Heart left ventricle (tissue), 16 donors: ENCODE measurements at regions of chr21 and their contacts with region 1.

Region 1: GRCh38 chr21:45074048-45074817 is at the start of gene ADARB1:
- DNase-seq: peak; percentile 68 to 84 (median 76)
- ATAC-seq: peak; percentile 63 to 81 (median 74)
- H3K4me3 ChIP-seq: peak within 1 kb of the TSS; percentile 75 to 100 (median 94)
- H3K27ac ChIP-seq: peak within 1 kb of the TSS; percentile 81 to 98 (median 94)
- H3K4me1 ChIP-seq: peaks cover 0 to 44% (median 13%) of the 10 kb centered on the region in 12 donors
- H3K27me3 ChIP-seq: peaks cover 0 to 5% (median 0%) of the 10 kb centered on the region in 9 donors
- CTCF ChIP-seq: no peak
- POLR2A ChIP-seq: peak in 1 of 2 donors; percentile 82
- total RNA-seq, gene ADARB1: 6.9 to 16.3 (median 12.1) TPM

Region 2: DNA sequence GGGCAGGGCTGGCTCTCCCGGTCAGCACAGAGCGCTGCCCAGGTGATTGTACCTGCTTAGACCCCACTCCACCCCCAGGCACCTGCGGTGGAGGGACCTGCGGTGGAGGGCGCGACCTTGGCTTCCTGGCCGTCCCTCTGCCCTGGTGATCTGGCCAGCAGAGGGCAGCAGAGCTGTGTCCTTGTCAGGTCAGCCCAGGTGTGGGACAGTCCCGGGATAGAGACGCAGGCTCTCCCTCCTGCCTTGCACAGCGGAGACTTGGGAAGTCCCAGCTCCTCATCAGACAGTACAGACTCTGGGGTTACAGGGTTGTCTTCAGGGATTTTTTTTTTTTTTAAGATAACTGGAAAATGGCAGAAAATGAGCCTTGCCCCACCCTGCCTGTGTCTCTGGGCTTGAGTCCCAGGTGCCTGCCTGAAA is 124.4 kb before region 1 on chr21:
- intact Hi-C with region 1: loop called in 3 of 10 experiments (anchors 1 to 10 kb)
- DNase-seq: peak; percentile 89 to 94 (median 90)
- ATAC-seq: peak; percentile 59 to 68 (median 62)
- H3K4me3 ChIP-seq: no peak overlapping the region
- H3K27ac ChIP-seq: peak overlapping the region in 11 of 12 donors; percentile 42 to 96 (median 75)
- H3K4me1 ChIP-seq: peaks cover 0 to 87% (median 47%) of the 10 kb centered on the region in 12 donors
- H3K27me3 ChIP-seq: no peaks in the 10 kb centered on the region
- CTCF ChIP-seq: peak; percentile 90 to 97 (median 94)
- POLR2A ChIP-seq: no peak

Region 3: GRCh38 chr21:44958471-44959191 is 115.6 kb before region 1 on chr21:
- intact Hi-C with region 1: loop called in 4 of 10 experiments (anchors 2 to 10 kb)
- DNase-seq: peak; percentile 82 to 92 (median 88)
- ATAC-seq: peak; percentile 65 to 83 (median 66)
- H3K4me3 ChIP-seq: peak overlapping the region in 8 of 12 donors; percentile 11 to 30 (median 25)
- H3K27ac ChIP-seq: peak overlapping the region; percentile 24 to 86 (median 76)
- H3K4me1 ChIP-seq: peaks cover 13 to 92% (median 60%) of the 10 kb centered on the region in 12 donors
- H3K27me3 ChIP-seq: no peaks in the 10 kb centered on the region
- CTCF ChIP-seq: no peak
- POLR2A ChIP-seq: peak in 1 of 2 donors; percentile 36

Region 4: DNA sequence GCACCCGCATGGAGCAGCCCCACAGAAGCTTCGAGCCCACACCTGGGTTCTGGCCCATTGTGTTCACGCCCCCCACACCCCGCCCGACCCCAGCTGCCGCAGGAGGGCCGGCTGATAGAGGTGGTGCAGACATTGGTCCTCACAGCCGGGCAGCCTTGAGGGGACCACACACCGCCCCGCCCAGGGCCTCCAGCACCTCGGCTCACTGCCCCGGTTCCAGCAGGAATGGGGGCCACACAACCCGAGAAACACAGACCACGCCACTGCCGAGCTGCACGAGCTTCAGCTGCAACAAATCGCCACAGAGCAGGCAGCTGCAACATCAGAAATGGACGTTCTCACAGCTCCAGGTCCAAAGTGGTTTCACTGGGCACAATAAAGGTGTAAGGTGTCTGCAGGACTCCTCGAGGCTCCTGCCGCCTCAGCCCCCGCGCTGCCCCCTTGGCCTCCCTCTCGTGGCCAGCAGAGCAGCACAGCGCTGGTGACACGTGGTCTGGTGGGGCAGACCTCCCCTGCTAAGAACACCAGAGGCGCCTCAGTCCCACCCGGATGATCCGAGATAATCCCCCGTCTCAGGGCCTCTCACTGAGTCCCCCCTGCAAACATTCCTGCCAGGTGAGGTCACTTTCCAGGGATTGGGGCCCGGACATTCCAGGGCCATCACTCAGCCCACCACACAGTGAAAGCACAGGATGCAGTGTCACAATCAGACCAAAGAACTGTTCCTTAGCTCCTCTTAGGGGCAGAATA is 62.1 kb before region 1 on chr21:
- intact Hi-C with region 1: loop called in 1 of 10 experiments (anchors 10 kb)
- DNase-seq: peak in 3 of 5 donors; percentile 37 to 62 (median 56)
- ATAC-seq: peak; percentile 37 to 66 (median 50)
- H3K4me3 ChIP-seq: no peak overlapping the region
- H3K27ac ChIP-seq: peak overlapping the region in 1 of 12 donors; percentile 33
- H3K4me1 ChIP-seq: peaks cover 0 to 19% (median 9%) of the 10 kb centered on the region in 12 donors
- H3K27me3 ChIP-seq: peaks cover 0 to 7% (median 0%) of the 10 kb centered on the region in 9 donors
- CTCF ChIP-seq: peak in 2 of 12 donors; percentile 26 to 28
- POLR2A ChIP-seq: no peak

Region 5: DNA sequence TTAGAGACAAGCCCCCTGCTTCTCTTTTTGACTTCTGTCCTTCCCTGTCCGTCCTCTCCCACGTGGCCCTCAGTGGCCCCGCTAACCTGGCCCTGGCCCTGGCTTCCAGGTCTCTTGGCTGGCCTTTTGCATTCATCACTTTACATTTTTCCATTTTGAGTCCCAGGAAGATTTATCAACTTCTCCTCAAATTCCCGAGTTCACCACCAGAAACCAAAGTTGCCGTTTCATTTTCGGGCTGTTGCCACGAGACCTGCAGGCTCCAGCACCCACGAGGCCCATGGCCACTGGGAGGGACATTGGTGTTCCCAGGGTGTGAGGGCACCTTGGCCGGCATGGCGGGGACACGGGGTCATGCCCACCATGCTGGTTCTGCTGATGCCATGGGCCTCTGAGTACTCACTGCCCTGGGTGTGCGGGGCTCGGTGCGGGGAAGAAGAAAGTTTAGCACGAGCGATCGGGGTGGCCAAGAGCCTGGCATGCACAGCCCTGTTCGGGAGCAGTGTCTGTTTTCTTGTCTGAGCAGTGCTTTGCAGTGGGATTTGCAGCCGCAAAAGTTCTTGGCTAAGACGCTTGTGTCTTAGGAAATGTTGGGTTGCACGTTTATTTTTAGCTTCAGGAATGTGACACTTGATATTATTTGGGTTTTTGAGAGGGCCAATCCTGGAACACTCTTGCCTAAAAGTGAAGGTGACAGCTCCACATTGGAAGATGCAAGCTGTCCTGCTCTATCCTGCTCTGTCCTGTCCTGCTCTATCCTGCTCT is 40.3 kb before region 1 on chr21:
- intact Hi-C with region 1: loop called in 1 of 10 experiments (anchors 2 kb)
- DNase-seq: peak in 1 of 5 donors; percentile 26
- ATAC-seq: peak; percentile 23 to 61 (median 44)
- H3K4me3 ChIP-seq: peak overlapping the region in 6 of 12 donors; percentile 4 to 28 (median 24)
- H3K27ac ChIP-seq: peak overlapping the region in 10 of 12 donors; percentile 14 to 55 (median 42)
- H3K4me1 ChIP-seq: peaks cover 5 to 53% (median 30%) of the 10 kb centered on the region in 12 donors
- H3K27me3 ChIP-seq: no peaks in the 10 kb centered on the region
- CTCF ChIP-seq: no peak
- POLR2A ChIP-seq: no peak

Region 6: DNA sequence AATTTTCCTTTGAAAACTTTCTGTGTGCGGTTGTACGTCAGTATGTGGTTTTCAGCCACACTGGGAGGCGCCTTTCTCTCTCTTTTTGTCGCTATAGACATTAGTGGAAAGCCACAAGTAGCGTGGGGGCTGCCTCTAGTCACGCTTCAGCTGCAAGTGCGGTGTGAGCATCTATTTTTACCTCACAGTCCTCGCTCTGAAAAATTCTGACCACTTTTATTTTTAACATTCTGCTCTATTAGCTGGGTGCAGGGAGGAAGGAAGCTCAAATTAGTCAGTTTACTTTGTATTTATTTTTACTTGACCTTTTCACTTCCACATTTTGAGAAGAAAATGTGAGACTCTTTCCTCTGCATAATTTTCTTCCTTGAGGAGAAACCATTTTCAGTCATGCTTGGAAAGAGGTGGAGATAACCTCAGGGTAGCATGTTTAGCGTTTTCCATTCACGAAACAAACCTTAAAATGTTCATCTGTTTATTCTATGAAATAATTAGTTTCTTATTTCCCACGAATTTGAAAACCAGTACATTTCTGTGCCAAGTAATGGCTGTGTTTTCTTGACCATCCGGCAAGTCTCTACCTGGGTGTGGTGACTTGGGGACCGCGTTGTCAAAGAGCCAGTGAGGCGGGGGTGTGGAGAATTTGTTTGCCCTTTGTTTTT is 35.7 kb after region 1 on chr21:
- intact Hi-C with region 1: loop called in 2 of 10 experiments (anchors 5 kb)
- DNase-seq: peak in 1 of 5 donors; percentile 48
- ATAC-seq: peak; percentile 18 to 69 (median 24)
- H3K4me3 ChIP-seq: peak overlapping the region in 9 of 12 donors; percentile 4 to 33 (median 22)
- H3K27ac ChIP-seq: peak overlapping the region in 11 of 12 donors; percentile 25 to 83 (median 71)
- H3K4me1 ChIP-seq: peaks cover 6 to 78% (median 70%) of the 10 kb centered on the region in 12 donors
- H3K27me3 ChIP-seq: no peaks in the 10 kb centered on the region
- CTCF ChIP-seq: no peak
- POLR2A ChIP-seq: no peak

Region 7: GRCh38 chr21:45167796-45168222 is 93.6 kb after region 1 on chr21:
- intact Hi-C with region 1: no loop called
- DNase-seq: no peak
- ATAC-seq: no peak
- H3K4me3 ChIP-seq: no peak overlapping the region
- H3K27ac ChIP-seq: no peak overlapping the region
- H3K4me1 ChIP-seq: peaks cover 0 to 29% (median 10%) of the 10 kb centered on the region in 12 donors
- H3K27me3 ChIP-seq: no peaks in the 10 kb centered on the region
- CTCF ChIP-seq: no peak
- POLR2A ChIP-seq: no peak

Region 8: GRCh38 chr21:45542242-45542666 is 468.0 kb after region 1 on chr21 and contains the start of gene SLC19A1:
- intact Hi-C with region 1: no loop called
- DNase-seq: peak; percentile 65 to 89 (median 74)
- ATAC-seq: peak in 3 of 4 donors; percentile 67 to 89 (median 88)
- H3K4me3 ChIP-seq: peak within 1 kb of the TSS; percentile 41 to 88 (median 66)
- H3K27ac ChIP-seq: peak within 1 kb of the TSS in 6 of 12 donors; percentile 19 to 69 (median 46)
- H3K4me1 ChIP-seq: peaks cover 4 to 19% (median 11%) of the 10 kb centered on the region in 12 donors
- H3K27me3 ChIP-seq: no peaks in the 10 kb centered on the region
- CTCF ChIP-seq: peak in 11 of 12 donors; percentile 8 to 61 (median 43)
- POLR2A ChIP-seq: peak in 1 of 2 donors; percentile 33
- total RNA-seq, gene SLC19A1: 2.4 to 7.0 (median 3.0) TPM